ENCODE measurements at regions of chr2 and their contacts with region 1.

Region 1: GRCh38 chr2:37389989-37390765 is 45.7 kb downstream of the QPCT start:
- DNase-seq: peak; percentile 69
- H3K4me3 Mint-ChIP-seq: no peak overlapping the region
- H3K27ac Mint-ChIP-seq: peak overlapping the region; percentile 75
- H3K4me1 Mint-ChIP-seq: no peaks in the 10 kb centered on the region
- H3K27me3 Mint-ChIP-seq: no peaks in the 10 kb centered on the region

Region 2: GRCh38 chr2:37376421-37377186 is 13.6 kb before region 1 on chr2:
- CTCF ChIA-PET with region 1: interaction called, 17 read pairs
- POLR2A ChIA-PET with region 1: interaction called, 9 read pairs
- DNase-seq: peak; percentile 26
- H3K4me3 Mint-ChIP-seq: peak overlapping the region; percentile 39
- H3K27ac Mint-ChIP-seq: peak overlapping the region; percentile 5
- H3K4me1 Mint-ChIP-seq: peaks cover 25% of the 10 kb centered on the region
- H3K27me3 Mint-ChIP-seq: peaks cover 60% of the 10 kb centered on the region

Region 3: GRCh38 chr2:37414470-37414949 is 24.3 kb after region 1 on chr2:
- CTCF ChIA-PET with region 1: interaction called, 27 read pairs
- POLR2A ChIA-PET with region 1: no interaction called
- DNase-seq: no peak
- H3K4me3 Mint-ChIP-seq: no peak overlapping the region
- H3K27ac Mint-ChIP-seq: no peak overlapping the region
- H3K4me1 Mint-ChIP-seq: peaks cover 5% of the 10 kb centered on the region
- H3K27me3 Mint-ChIP-seq: peaks cover 3% of the 10 kb centered on the region

Region 4: GRCh38 chr2:37456479-37456878 is 66.3 kb after region 1 on chr2:
- CTCF ChIA-PET with region 1: no interaction called
- POLR2A ChIA-PET with region 1: no interaction called
- DNase-seq: peak; percentile 54
- H3K4me3 Mint-ChIP-seq: no peak overlapping the region
- H3K27ac Mint-ChIP-seq: peak overlapping the region; percentile 52
- H3K4me1 Mint-ChIP-seq: peaks cover 47% of the 10 kb centered on the region
- H3K27me3 Mint-ChIP-seq: no peaks in the 10 kb centered on the region